Naive thymus-derived CD8-positive, alpha-beta T cell (primary cell): ENCODE measurements at regions of chr4 and their contacts with region 1.

Region 1: DNA sequence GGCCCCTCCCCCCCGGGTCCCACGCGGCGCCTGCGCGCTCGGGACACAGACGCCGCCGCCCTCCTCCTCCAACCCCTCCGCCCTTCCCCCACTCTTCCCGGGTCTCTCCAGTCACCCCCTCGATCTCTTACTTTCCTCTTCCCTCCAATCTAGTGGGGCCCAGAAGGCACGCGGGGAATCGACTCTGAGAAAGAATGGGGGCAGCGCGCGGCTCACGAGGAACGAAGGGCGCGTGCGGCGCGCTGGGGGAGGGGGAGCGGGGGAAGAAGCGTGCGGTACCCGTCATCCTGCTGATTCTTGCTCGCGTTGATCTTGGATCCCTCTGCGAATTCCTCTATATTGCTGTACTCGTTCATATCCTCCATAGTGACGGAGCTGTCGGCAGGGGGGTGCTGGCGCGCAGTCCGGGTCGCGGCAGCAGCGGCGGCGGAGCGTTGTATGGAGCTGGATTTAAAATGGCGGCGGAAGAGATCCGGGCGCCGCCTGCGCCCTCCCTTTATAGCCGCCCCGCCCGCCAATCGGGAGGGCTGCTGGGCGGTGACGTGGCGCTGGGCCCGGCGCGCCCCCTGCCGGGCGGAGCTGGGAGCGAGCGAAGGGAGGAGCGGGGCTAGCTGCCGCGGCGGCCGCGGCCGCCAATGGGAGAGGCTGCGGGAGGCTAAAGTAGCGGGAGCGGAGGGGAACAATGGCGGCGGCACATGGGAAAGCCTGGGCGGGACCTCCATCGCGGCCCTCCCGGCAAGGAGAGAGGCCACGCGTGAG is 1.1 kb downstream of the HNRNPDL start:
- DNase-seq: peak; percentile 89 to 97 (median 94)
- ATAC-seq: peak; percentile 56 to 63
- H3K4me3 Mint-ChIP-seq: peak overlapping the region; percentile 98 to 100 (median 100)
- H3K27ac Mint-ChIP-seq: peak overlapping the region; percentile 97 to 100 (median 99)
- H3K4me1 Mint-ChIP-seq: peaks cover 24 to 79% (median 71%) of the 10 kb centered on the region in 4 donors
- H3K27me3 Mint-ChIP-seq: peaks cover 0 to 4% (median 0%) of the 10 kb centered on the region in 5 donors

Region 2: GRCh38 chr4:82284858-82285805 is 144.0 kb before region 1 on chr4:
- POLR2A ChIA-PET with region 1: interaction called, 31 read pairs
- DNase-seq: peak; percentile 99 to 100 (median 99)
- ATAC-seq: peak; percentile 92
- H3K4me3 Mint-ChIP-seq: peak overlapping the region; percentile 80 to 92 (median 88)
- H3K27ac Mint-ChIP-seq: peak overlapping the region; percentile 19 to 94 (median 88)
- H3K4me1 Mint-ChIP-seq: peaks cover 12 to 17% (median 15%) of the 10 kb centered on the region in 4 donors
- H3K27me3 Mint-ChIP-seq: no peaks in the 10 kb centered on the region

Region 3: GRCh38 chr4:82360298-82361177 is 68.6 kb before region 1 on chr4:
- POLR2A ChIA-PET with region 1: interaction called, 28 read pairs
- DNase-seq: peak in 3 of 10 donors; percentile 34 to 46 (median 40)
- ATAC-seq: peak; percentile 57 to 68
- H3K4me3 Mint-ChIP-seq: peak overlapping the region in 8 of 10 donors; percentile 0 to 72 (median 22)
- H3K27ac Mint-ChIP-seq: peak overlapping the region; percentile 2 to 78 (median 48)
- H3K4me1 Mint-ChIP-seq: peaks cover 33 to 95% (median 91%) of the 10 kb centered on the region in 4 donors
- H3K27me3 Mint-ChIP-seq: no peaks in the 10 kb centered on the region

Region 4: DNA sequence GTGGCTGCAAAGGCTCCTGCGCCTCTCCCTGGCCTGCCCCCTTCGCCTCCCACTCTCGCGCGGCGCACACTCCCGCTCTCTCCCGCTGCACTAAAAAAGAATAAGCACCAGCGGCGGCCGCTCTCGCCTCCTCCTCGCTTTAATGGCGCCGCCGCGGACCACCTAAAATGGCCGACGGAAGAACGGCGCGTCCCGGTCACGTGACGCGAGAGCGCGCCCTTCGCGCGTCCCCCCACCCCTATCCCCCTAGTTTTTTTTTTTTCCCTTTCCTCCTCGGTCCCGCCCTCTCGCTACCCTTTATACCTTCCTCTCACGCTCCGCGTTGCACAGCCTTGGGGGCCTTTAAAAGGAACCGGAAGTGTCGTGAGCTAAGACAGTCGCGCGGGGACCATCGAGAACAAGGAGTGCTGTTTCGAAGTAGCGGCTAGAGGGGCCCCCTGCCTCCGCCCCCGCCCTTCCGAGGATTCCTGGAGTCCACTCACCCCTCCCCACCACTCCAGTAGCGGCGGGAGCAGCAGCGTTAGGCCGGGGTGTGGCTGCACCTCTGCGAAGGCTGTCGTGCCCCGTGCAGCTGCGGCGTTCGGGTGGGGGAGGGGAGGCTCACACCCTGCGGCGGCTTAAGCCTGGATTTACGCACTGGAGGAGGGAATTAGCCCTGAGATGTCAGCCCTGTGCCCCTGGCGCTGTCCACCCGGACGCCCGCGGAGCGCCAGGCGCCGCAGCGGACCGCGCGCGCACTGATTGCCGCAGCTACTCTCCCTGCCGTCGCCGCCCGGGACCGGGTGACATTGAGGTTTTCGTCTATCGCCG is 55.1 kb before region 1 on chr4 and contains the start of gene HNRNPD:
- POLR2A ChIA-PET with region 1: interaction called, 193 read pairs
- DNase-seq: peak; percentile 83 to 97 (median 91)
- ATAC-seq: peak; percentile 87 to 90
- H3K4me3 Mint-ChIP-seq: peak within 1 kb of the TSS; percentile 91 to 99 (median 97)
- H3K27ac Mint-ChIP-seq: peak within 1 kb of the TSS; percentile 97 to 100 (median 98)
- H3K4me1 Mint-ChIP-seq: peaks cover 21 to 59% (median 53%) of the 10 kb centered on the region in 4 donors
- H3K27me3 Mint-ChIP-seq: peaks cover 0 to 3% (median 0%) of the 10 kb centered on the region in 5 donors
- polyA plus RNA-seq, gene HNRNPD: 176 to 292 (median 232) TPM

Region 5: DNA sequence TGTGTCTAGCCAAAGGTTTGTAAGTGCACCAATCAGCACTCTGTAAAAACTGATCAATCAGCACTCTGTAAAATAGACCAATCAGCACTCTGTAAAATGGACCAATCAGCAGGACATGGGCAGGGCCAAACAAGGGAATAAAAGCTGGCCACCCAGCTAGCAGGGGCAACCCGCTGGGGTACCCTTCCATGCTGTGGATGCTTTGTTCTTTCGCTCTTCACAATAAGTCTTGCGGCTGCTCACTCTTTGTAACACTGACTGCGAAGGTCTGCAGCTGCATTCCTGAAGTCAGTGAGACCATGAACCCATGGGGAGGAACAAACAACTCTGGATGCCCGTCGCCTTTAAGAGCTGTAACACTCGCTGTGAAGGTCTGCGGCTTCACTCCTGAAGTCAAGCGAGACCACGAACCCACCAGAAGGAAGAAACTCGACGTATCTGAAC is 13.2 kb before region 1 on chr4:
- POLR2A ChIA-PET with region 1: interaction called, 13 read pairs
- DNase-seq: peak in 1 of 10 donors; percentile 2
- ATAC-seq: peak; percentile 38 to 39
- H3K4me3 Mint-ChIP-seq: peak overlapping the region in 9 of 10 donors; percentile 15 to 73 (median 53)
- H3K27ac Mint-ChIP-seq: no peak overlapping the region
- H3K4me1 Mint-ChIP-seq: peaks cover 7 to 20% (median 19%) of the 10 kb centered on the region in 4 donors
- H3K27me3 Mint-ChIP-seq: peaks cover 0 to 16% (median 11%) of the 10 kb centered on the region in 5 donors

Region 6: DNA sequence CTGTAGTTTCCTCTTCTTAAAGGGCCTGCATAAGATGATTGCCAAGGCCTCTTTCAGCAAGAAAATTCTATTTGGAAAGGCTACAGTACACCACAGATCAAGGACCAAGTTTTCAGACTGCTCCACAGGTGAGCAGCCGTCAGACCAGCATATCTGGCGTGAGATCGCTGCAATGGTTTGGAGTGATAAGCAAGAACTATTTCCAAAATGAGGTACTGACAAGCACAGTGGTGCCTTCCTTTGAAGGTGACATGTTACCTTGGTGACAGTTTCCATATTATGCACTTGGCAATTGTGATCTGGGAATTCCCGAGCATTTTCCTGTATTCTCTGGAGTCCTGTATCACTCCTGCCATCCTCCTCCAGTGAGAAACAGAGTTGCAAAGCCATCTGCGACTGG is 139.9 kb after region 1 on chr4:
- POLR2A ChIA-PET with region 1: no interaction called
- DNase-seq: no peak
- ATAC-seq: no peak
- H3K4me3 Mint-ChIP-seq: no peak overlapping the region
- H3K27ac Mint-ChIP-seq: no peak overlapping the region
- H3K4me1 Mint-ChIP-seq: peaks cover 0 to 2% (median 0%) of the 10 kb centered on the region in 4 donors
- H3K27me3 Mint-ChIP-seq: peaks cover 17 to 32% (median 18%) of the 10 kb centered on the region in 5 donors

Region 7: DNA sequence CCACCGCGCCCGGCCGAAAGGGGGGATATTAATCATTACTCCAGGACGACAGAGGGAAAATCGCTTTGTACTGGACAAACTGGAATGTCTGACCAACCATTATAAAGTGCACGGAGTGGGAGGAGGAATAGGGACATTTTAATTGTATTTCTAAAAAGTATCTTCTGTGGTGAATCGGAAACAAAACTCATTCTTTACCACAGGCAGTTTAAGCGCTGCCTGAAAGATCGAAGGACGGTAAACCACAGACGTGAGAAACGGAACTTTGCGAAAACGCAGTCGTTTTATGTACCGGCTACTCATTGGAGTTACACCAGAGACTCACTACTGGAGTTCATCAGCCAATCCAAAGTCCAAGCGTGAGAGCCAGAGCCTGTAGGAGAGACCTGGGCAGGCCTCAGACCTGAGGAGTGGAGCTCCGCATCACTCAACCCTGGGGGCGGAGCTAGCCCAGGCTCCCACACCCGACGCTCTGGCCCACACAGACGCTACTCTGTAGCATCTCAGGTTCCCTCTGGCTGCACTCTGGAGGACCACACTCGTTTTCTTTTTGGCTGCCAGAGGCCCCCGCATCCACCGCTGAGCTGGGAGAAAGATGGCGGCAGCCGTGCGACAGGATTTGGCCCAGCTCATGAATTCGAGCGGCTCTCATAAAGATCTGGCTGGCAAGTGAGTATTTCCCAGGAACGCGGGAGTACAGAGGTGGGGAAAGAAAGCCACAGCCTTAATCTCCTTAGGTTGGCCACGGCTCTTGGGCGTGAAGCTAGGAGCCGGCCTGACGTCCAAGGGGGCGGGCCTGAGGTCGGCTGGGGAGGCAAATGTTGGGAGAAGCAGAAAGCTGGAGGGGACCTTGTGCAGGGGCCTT is 605.7 kb after region 1 on chr4 and contains the start of gene COPS4:
- POLR2A ChIA-PET with region 1: interaction called, 14 read pairs
- DNase-seq: peak; percentile 83 to 98 (median 95)
- ATAC-seq: peak; percentile 94 to 96
- H3K4me3 Mint-ChIP-seq: peak within 1 kb of the TSS; percentile 91 to 100 (median 100)
- H3K27ac Mint-ChIP-seq: peak within 1 kb of the TSS; percentile 97 to 100 (median 99)
- H3K4me1 Mint-ChIP-seq: peaks cover 9 to 47% (median 36%) of the 10 kb centered on the region in 4 donors
- H3K27me3 Mint-ChIP-seq: peaks cover 0 to 1% (median 0%) of the 10 kb centered on the region in 5 donors
- polyA plus RNA-seq, gene COPS4: 58.4 to 62.5 (median 61.2) TPM